ENCODE measurements at regions of chr17 and their contacts with region 1.

Region 1: DNA sequence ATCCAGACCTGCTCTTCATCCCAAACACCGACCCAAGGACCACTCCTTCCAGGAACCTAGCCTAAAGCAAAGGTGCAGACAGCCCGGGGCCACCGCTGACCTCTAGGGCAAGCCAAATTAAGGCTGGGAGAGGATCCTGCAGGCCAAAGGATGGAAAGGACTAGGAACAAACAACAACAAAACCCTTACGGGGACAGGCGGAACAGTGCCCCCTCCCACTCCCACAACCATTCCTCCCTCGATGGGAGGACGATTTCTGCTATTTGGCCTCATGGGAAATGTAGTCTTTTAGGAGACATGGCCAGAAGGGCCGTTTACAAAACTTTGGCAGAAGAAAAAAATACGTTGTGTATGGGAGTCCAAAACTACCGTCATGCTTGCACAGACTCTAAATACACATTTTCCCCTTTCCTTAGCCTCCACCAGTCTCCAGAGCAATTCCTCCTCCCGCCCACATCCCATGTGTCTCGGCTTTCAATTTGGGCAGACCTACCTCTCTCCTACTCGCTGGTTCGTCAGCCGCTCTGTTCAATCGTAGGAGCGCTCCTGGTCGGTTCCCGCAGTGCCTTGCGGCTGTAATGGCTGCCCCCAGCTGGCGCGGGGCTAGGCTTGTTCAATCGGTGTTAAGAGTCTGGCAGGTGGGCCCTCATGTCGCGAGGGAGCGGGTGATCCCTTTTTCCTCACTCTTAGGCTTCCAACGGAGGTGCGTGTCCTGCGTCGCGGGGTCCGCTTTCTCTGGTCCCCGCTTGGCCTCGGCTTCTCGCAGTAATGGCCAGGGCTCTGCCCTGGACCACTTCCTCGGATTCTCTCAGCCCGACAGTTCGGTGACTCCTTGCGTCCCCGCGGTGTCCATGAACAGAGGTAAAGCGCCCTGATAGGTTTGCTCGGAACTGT is at the start of gene ERAL1:
- DNase-seq: peak; percentile 94
- H3K4me3 ChIP-seq: peak within 1 kb of the TSS; percentile 75
- H3K27ac ChIP-seq: peak within 1 kb of the TSS; percentile 78
- H3K4me1 ChIP-seq: peaks cover 3% of the 10 kb centered on the region
- H3K27me3 ChIP-seq: no peaks in the 10 kb centered on the region
- CTCF ChIP-seq: no peak
- total RNA-seq, gene ERAL1: 80.5 and 85.2 TPM in 2 replicates

Region 2: GRCh38 chr17:28792877-28793661 is 61.6 kb before region 1 on chr17:
- CTCF ChIA-PET with region 1: no interaction called
- POLR2A ChIA-PET with region 1: no interaction called
- intact Hi-C with region 1: loop called (anchors 10 kb)
- DNase-seq: peak; percentile 47
- H3K4me3 ChIP-seq: no peak overlapping the region
- H3K27ac ChIP-seq: no peak overlapping the region
- H3K4me1 ChIP-seq: peaks cover 19% of the 10 kb centered on the region
- H3K27me3 ChIP-seq: no peaks in the 10 kb centered on the region
- CTCF ChIP-seq: no peak

Region 3: GRCh38 chr17:28828294-28829040 is 26.2 kb before region 1 on chr17:
- CTCF ChIA-PET with region 1: no interaction called
- POLR2A ChIA-PET with region 1: no interaction called
- intact Hi-C with region 1: no loop called
- DNase-seq: no peak
- H3K4me3 ChIP-seq: no peak overlapping the region
- H3K27ac ChIP-seq: no peak overlapping the region
- H3K4me1 ChIP-seq: no peaks in the 10 kb centered on the region
- H3K27me3 ChIP-seq: no peaks in the 10 kb centered on the region
- CTCF ChIP-seq: no peak

Region 4: DNA sequence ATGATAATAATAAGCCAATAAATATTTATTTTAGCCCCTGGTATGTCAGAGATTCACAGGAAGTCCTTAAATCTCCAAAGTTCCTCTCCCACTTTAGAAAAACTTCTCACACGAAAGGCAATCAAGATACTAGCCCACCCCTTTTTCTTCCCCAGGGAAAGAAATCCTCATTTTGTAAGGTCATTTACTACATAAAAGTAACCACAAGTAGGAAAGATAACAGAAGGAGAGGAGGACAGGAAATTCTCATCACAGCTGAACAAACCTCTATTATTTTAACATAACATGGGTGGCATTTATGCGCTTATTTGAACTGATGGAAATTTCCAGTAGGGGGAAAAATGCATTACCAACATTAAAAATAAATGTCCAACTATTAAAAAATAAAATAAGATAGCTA is 15.5 kb before region 1 on chr17:
- CTCF ChIA-PET with region 1: no interaction called
- POLR2A ChIA-PET with region 1: no interaction called
- intact Hi-C with region 1: no loop called
- DNase-seq: peak; percentile 74
- H3K4me3 ChIP-seq: no peak overlapping the region
- H3K27ac ChIP-seq: peak overlapping the region; percentile 67
- H3K4me1 ChIP-seq: peaks cover 11% of the 10 kb centered on the region
- H3K27me3 ChIP-seq: no peaks in the 10 kb centered on the region
- CTCF ChIP-seq: no peak

Region 5: GRCh38 chr17:28874750-28875149 is 20.0 kb after region 1 on chr17:
- CTCF ChIA-PET with region 1: no interaction called
- POLR2A ChIA-PET with region 1: interaction called, 11 read pairs
- intact Hi-C with region 1: no loop called
- DNase-seq: no peak
- H3K4me3 ChIP-seq: no peak overlapping the region
- H3K27ac ChIP-seq: no peak overlapping the region
- H3K4me1 ChIP-seq: no peaks in the 10 kb centered on the region
- H3K27me3 ChIP-seq: no peaks in the 10 kb centered on the region
- CTCF ChIP-seq: no peak

Region 6: GRCh38 chr17:28896884-28897768 is 42.4 kb after region 1 on chr17 and contains the start of gene FLOT2:
- CTCF ChIA-PET with region 1: interaction called, 3 read pairs
- POLR2A ChIA-PET with region 1: interaction called, 8 read pairs
- intact Hi-C with region 1: loop called (anchors 5 kb)
- DNase-seq: peak; percentile 75
- H3K4me3 ChIP-seq: peak within 1 kb of the TSS; percentile 85
- H3K27ac ChIP-seq: peak within 1 kb of the TSS; percentile 92
- H3K4me1 ChIP-seq: peaks cover 46% of the 10 kb centered on the region
- H3K27me3 ChIP-seq: no peaks in the 10 kb centered on the region
- CTCF ChIP-seq: peak; percentile 25; the same call in 1 of the 2 replicates
- total RNA-seq, gene FLOT2: 79.1 and 112 TPM in 2 replicates

Region 7: DNA sequence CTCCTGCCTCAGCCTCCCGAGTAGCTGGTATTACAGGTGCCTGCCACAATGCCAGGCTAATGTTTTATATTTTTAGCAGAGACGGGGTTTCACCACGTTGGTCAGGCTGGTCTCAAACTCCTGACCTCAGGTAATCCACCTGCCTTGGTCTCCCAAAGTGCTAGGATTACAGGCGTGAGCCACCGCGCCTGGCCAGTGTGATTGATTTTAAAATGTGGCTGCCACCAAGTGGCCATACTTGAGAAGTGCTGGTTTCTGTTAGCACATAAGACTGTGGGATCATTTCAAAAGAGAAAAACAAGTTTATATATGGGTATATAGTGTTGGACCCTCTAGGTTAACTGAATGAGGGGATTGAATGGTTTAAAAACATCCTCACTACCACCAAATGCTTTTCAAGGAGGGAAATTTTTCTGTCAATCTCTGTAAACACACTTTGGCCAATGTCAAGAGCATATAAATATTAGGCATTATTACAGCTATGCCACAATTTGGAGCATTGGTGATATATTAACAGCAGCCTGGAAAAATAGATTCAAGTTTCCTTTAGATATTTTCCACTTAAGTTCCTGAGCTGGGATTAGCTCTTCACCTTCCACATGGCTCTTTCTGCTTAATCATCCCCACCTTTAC is 61.7 kb after region 1 on chr17:
- CTCF ChIA-PET with region 1: no interaction called
- POLR2A ChIA-PET with region 1: no interaction called
- intact Hi-C with region 1: no loop called
- DNase-seq: peak; percentile 60
- H3K4me3 ChIP-seq: no peak overlapping the region
- H3K27ac ChIP-seq: no peak overlapping the region
- H3K4me1 ChIP-seq: no peaks in the 10 kb centered on the region
- H3K27me3 ChIP-seq: no peaks in the 10 kb centered on the region
- CTCF ChIP-seq: peak; percentile 73